ENCODE measurements at regions of chr9 and their contacts with region 1.

Region 1: DNA sequence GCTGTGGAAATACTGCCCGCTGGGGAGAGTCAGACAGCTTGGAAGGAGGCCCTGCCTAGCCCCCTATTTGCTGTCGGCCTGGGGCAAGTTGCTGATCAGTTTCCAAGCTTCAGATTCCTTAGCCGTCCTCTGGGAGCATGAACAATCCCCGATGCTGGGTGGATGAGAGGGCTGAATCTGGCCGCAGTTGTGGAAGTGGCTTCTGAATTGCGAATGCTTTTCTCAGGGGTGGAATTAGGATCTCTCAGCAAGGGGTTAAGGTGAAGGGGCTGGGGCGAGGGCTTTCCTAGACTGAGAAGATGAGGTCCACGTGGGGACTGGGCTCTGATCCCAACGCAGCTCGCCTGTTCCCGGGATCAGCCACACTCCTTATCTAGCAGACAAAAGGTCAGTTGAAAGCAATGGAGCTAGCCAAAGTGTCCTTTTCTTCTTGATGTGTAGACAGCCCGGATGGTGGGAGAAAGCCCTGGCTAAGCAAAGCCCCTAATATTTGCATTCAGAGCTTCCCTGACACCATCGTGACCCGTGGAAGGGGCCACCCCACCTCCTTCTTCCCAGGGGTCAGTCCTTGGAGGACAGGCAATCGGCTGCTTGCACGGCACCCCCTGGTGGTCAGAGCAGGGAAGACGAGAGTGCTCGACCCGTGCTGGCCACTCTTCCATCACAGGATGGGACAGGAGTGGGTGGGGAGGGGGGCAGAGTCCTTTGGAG is 54.9 kb downstream of the COL15A1 start:
- DNase-seq: peak; percentile 56
- H3K4me3 ChIP-seq: no peak overlapping the region
- H3K27ac ChIP-seq: no peak overlapping the region
- H3K4me1 ChIP-seq: peaks cover 4% of the 10 kb centered on the region
- CTCF ChIP-seq: peak; percentile 85

Region 2: DNA sequence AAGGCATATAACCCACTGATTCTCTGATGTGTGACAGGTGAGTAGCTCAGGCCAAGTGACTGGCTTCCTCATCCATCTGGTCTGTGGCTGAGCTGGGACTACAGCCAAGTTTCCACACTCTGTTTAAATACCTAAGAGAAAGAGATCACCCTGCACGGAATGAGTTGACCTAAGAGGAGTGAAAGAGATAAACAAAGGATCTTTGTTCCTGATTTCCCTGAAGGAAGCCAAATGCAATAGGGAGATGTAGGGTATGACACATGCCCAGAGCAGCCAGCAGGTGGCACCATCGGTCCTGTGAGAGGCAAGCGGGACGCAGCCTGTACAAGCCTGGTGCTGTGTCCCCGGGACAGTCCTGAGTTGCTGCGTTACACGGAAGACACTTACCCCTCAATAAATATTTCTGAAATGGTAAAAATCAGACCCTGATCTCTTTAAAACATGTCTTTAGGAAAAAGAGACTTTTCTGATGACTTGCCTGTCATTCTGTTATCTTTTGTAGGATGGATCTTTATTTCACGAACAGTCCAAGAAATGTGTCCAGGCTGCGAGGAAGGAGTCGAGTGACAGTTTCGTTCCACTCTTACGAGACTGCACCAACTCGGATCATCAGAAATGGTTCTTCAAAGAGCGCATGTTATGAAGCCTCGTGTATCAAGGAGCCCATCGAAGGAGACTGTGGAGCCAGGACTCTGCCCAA is 150.0 kb before region 1 on chr9:
- CTCF ChIA-PET with region 1: no interaction called
- POLR2A ChIA-PET with region 1: no interaction called
- intact Hi-C with region 1: loop called (anchors 1 kb)
- DNase-seq: peak; percentile 76
- H3K4me3 ChIP-seq: no peak overlapping the region
- H3K27ac ChIP-seq: no peak overlapping the region
- H3K4me1 ChIP-seq: no peaks in the 10 kb centered on the region
- CTCF ChIP-seq: peak; percentile 94

Region 3: GRCh38 chr9:98867429-98868168 is 131.0 kb before region 1 on chr9:
- CTCF ChIA-PET with region 1: no interaction called
- POLR2A ChIA-PET with region 1: no interaction called
- intact Hi-C with region 1: loop called (anchors 5 kb)
- DNase-seq: peak; percentile 41
- H3K4me3 ChIP-seq: no peak overlapping the region
- H3K27ac ChIP-seq: no peak overlapping the region
- H3K4me1 ChIP-seq: no peaks in the 10 kb centered on the region
- CTCF ChIP-seq: no peak

Region 4: GRCh38 chr9:99057665-99058625 is 59.3 kb after region 1 on chr9:
- CTCF ChIA-PET with region 1: no interaction called
- POLR2A ChIA-PET with region 1: no interaction called
- intact Hi-C with region 1: loop called (anchors 2 kb)
- DNase-seq: peak; percentile 83
- H3K4me3 ChIP-seq: peak overlapping the region; percentile 41
- H3K27ac ChIP-seq: peak overlapping the region; percentile 34
- H3K4me1 ChIP-seq: peaks cover 33% of the 10 kb centered on the region
- CTCF ChIP-seq: no peak

Region 5: DNA sequence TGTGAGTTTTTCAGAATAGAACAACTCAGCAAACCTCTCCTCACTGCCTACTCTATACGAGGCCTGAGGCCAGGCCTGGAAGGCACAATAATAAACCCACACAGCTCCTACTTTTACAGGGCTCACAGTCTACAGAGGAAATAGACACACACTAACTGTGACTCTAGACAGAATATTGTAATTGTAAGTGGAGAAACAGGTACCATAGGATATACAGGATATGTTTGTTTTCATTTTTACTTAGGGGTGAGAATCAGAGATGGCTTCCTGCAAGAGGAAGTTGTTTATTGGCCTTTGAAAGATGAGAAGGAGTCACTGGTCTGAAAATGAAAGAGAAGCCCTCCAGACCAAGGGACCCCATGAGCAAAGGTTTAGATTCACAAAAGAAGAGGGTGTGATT is 70.5 kb after region 1 on chr9:
- CTCF ChIA-PET with region 1: no interaction called
- POLR2A ChIA-PET with region 1: no interaction called
- intact Hi-C with region 1: loop called (anchors 5 kb)
- DNase-seq: no peak
- H3K4me3 ChIP-seq: no peak overlapping the region
- H3K27ac ChIP-seq: no peak overlapping the region
- H3K4me1 ChIP-seq: peaks cover 7% of the 10 kb centered on the region
- CTCF ChIP-seq: no peak

Region 6: GRCh38 chr9:99104459-99105151 is 106.0 kb after region 1 on chr9 and contains the start of gene TGFBR1:
- CTCF ChIA-PET with region 1: no interaction called
- POLR2A ChIA-PET with region 1: interaction called, 4 read pairs
- intact Hi-C with region 1: loop called (anchors 5 kb)
- DNase-seq: peak; percentile 95
- H3K4me3 ChIP-seq: peak within 1 kb of the TSS; percentile 78
- H3K27ac ChIP-seq: peak within 1 kb of the TSS; percentile 31
- H3K4me1 ChIP-seq: peaks cover 46% of the 10 kb centered on the region
- CTCF ChIP-seq: no peak
- total RNA-seq, gene TGFBR1: 13.6 and 14.3 TPM in 2 replicates

Region 7: DNA sequence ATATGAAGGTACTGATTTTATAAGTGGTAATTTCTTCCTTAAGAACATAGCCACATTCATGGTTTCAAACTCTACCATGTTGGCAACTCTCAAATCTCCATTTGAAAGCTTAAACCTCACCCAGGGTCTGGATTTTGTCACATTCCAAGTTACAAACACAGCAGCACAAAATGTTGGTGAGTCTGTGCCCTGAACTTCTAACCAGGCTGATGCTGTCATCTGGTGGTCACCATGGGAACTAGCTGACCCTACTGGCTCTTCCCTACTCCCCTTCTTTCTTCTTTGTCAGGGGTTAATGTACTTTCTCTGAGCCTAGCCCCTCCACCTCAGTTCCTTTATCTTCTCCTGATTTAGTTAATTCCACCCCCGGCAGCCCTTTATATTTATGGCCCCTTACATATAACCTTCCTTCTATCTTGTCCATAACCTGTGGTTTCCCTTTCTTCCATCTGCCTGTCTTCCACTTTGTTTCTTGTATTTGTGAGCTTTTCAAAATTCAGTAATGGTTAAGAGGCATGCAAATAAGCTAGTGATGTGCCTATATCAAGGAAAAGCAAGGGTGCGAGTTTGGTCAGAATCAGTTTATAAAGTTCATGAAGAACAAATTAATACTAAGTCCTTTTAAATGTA is 142.2 kb after region 1 on chr9:
- CTCF ChIA-PET with region 1: interaction called, 4 read pairs
- POLR2A ChIA-PET with region 1: interaction called, 3 read pairs
- intact Hi-C with region 1: loop called (anchors 1 kb)
- DNase-seq: peak; percentile 69
- H3K4me3 ChIP-seq: no peak overlapping the region
- H3K27ac ChIP-seq: no peak overlapping the region
- H3K4me1 ChIP-seq: peaks cover 17% of the 10 kb centered on the region
- CTCF ChIP-seq: peak; percentile 96

Region 8: DNA sequence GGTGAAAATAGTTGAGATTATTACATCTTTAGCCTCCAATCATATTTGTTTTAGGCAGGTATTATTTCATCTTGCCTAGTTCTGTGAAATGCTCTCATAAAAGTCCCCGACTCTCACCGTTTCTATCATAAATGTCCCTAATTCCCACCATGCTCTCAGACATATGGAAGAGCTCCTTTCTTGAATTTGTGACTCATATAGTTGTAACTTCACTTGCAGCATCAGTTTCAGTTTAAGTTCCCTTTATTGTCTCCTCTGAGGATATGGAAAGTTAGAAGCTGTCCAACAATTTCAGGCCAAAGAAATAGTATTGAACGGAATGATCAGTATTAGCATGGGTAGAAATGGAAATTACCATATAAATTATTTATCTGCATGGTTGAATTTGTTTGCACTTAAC is 635.6 kb after region 1 on chr9:
- CTCF ChIA-PET with region 1: no interaction called
- POLR2A ChIA-PET with region 1: no interaction called
- intact Hi-C with region 1: no loop called
- DNase-seq: no peak
- H3K4me3 ChIP-seq: no peak overlapping the region
- H3K27ac ChIP-seq: no peak overlapping the region
- H3K4me1 ChIP-seq: peaks cover 20% of the 10 kb centered on the region
- CTCF ChIP-seq: no peak